Activated B cell treated with CpG ODN at 0.5 μM for 24 hours (primary cell): ENCODE measurements at regions of chr12 and their contacts with region 1.

Region 1: GRCh38 chr12:79935021-79935623 is at the start of gene PPP1R12A:
- DNase-seq: peak; percentile 94
- ATAC-seq: peak; percentile 83
- H3K4me3 Mint-ChIP-seq: peak within 1 kb of the TSS; percentile 99
- H3K27ac Mint-ChIP-seq: peak within 1 kb of the TSS; percentile 98
- H3K4me1 Mint-ChIP-seq: peaks cover 48% of the 10 kb centered on the region
- H3K27me3 Mint-ChIP-seq: no peaks in the 10 kb centered on the region
- CTCF ChIP-seq: no peak
- total RNA-seq, gene PPP1R12A: 72.9 and 90.4 TPM in 2 replicates

Region 2: GRCh38 chr12:79886917-79887519 is 48.1 kb before region 1 on chr12:
- CTCF ChIA-PET with region 1: no interaction called
- POLR2A ChIA-PET with region 1: interaction called, 3 read pairs
- intact Hi-C with region 1: loop called (anchors 1 kb)
- DNase-seq: no peak
- ATAC-seq: peak; percentile 57
- H3K4me3 Mint-ChIP-seq: no peak overlapping the region
- H3K27ac Mint-ChIP-seq: no peak overlapping the region
- H3K4me1 Mint-ChIP-seq: peaks cover 73% of the 10 kb centered on the region
- H3K27me3 Mint-ChIP-seq: no peaks in the 10 kb centered on the region
- CTCF ChIP-seq: no peak